A673 (cell line): ENCODE measurements at regions of chr19 and their contacts with region 1.

Region 1: DNA sequence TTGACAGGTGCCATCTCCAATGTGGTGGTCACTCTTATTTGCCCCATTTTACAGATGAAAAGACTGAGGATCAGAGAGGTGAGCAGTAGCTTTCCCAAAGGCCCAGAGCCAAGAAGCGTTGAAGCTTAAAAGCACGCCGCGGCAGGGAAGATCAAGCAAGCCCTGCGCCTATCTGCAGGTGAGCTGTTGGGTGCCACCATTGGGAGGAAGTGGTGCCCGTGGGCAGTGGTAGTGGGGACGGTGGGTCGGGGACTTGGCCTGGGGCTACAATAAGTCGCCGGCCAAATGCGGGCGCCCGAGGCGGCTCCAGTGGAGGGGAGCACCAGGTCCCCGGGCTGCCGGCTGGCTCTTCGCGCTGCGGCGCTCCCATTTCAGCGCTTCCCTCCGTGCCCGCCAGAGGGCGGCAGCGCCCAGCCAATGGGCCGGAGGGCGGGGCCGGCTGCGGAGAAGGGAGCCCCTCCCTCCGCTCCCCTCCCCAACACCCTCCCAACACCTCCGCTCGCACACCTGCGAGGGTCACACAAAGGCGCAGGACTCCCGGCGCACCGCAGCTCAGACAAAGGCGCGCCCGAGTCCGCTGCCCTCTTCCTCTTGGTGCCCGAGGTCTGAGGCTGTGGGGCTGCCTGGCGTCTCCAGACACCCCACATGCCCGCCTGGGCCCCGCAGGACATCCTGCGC is 744 bp upstream of the POU2F2 start:
- DNase-seq: peak; percentile 65
- H3K4me3 ChIP-seq: peak overlapping the region; percentile 27
- H3K27ac ChIP-seq: no peak overlapping the region
- H3K4me1 ChIP-seq: peaks cover 8% of the 10 kb centered on the region
- H3K27me3 ChIP-seq: peaks cover 7% of the 10 kb centered on the region
- CTCF ChIP-seq: peak; percentile 95

Region 2: GRCh38 chr19:42184401-42184861 is 51.4 kb after region 1 on chr19:
- CTCF ChIA-PET with region 1: interaction called, 7 read pairs
- POLR2A ChIA-PET with region 1: no interaction called
- intact Hi-C with region 1: loop called (anchors 1 kb)
- DNase-seq: peak; percentile 82
- H3K4me3 ChIP-seq: no peak overlapping the region
- H3K27ac ChIP-seq: no peak overlapping the region
- H3K4me1 ChIP-seq: no peaks in the 10 kb centered on the region
- H3K27me3 ChIP-seq: peaks cover 7% of the 10 kb centered on the region
- CTCF ChIP-seq: peak; percentile 93

Region 3: GRCh38 chr19:42440357-42441048 is 307.5 kb after region 1 on chr19:
- CTCF ChIA-PET with region 1: interaction called, 4 read pairs
- POLR2A ChIA-PET with region 1: no interaction called
- intact Hi-C with region 1: loop called (anchors 2 kb)
- DNase-seq: peak; percentile 87
- H3K4me3 ChIP-seq: no peak overlapping the region
- H3K27ac ChIP-seq: no peak overlapping the region
- H3K4me1 ChIP-seq: no peaks in the 10 kb centered on the region
- H3K27me3 ChIP-seq: no peaks in the 10 kb centered on the region
- CTCF ChIP-seq: peak; percentile 98